ENCODE measurements at regions of chr10 and their contacts with region 1.

Region 1: GRCh38 chr10:27759483-27760272 is 14.1 kb upstream of the MKX start:
- DNase-seq: no peak
- H3K4me3 ChIP-seq: no peak overlapping the region
- CTCF ChIP-seq: no peak
- POLR2A ChIP-seq: no peak

Region 2: GRCh38 chr10:27518261-27518660 is 241.4 kb before region 1 on chr10:
- intact Hi-C with region 1: loop called (anchors 5 kb)
- DNase-seq: no peak
- H3K4me3 ChIP-seq: no peak overlapping the region
- CTCF ChIP-seq: no peak
- POLR2A ChIP-seq: no peak

Measured in lower leg skin (tissue), 4 donors.